Posterior cingulate gyrus (tissue), 11 donors: ENCODE measurements at regions of chr19 and their contacts with region 1.

Region 1: GRCh38 chr19:32224371-32225244 is 120.8 kb upstream of the ZNF507 start:
- DNase-seq: peak in 9 of 10 donors; percentile 32 to 92 (median 67)

Region 2: GRCh38 chr19:30669329-30670010 is 1555.1 kb before region 1 on chr19:
- intact Hi-C with region 1: loop called (anchors 5 kb)
- DNase-seq: peak; percentile 69 to 96 (median 85)

Region 3: DNA sequence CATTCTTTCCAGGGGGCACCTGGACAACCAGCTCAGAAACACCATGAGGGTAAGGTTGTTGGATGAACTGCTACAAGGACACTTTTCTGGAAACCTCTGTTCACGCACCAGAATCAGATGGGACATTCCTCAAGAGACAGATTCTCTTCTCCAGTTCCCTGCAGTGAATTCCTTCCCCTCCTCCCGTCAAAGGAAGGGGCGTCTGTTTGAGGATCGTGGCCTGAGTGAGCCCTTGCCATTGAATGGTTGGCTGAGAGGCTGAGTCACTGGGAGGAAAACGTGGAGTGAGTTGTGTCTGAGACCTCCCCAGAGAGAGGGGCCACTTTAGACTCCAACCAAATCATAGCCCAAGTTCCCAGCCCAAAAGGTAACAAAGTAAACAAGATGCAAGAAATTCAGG is 41.4 kb after region 1 on chr19:
- intact Hi-C with region 1: no loop called
- DNase-seq: no peak